PC-3 (cell line): ENCODE measurements at regions of chr7 and their contacts with region 1.

Region 1: DNA sequence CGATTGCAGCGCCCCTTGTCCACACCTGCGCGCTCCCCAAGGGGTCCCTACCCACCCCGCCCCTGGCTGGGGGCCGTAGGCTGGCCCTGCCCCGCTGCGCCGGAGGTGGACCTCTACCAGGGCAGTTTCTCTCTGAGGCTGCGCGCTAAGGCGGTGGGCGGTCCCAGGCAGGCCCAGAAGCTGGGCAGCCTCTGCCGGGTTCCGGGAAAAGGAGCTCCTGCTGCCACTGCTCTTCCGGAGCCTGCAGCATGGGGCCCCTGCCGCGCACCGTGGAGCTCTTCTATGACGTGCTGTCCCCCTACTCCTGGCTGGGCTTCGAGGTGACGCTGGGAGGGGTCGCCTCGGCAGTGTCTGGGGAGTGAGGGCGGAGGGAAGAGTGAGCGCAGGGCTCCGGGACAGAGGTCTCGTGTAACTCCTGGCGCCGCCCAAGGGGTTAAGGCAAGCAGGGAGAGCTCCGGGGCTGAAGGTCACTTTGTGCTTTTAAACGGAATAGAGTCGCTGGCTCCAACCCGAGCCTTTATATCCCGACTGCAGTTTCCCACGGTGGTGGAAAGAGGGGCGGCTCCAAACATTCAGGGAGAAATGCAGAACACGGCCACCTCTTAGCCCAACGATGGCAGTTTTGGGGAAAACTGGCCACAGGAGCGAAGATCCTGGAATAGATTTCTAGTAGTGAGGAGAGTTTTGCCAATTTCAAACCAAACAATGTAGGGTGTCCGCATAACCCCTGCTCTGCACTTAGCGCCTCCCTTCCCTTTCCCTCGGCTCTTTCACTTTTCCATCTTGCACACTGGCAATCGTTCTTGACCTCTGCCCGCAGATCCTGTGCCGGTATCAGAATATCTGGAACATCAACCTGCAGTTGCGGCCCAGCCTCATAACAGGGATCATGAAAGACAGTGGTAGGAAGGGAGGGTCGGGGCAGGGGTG is at the start of gene GSTK1:
- DNase-seq: peak; percentile 69
- ATAC-seq: peak; percentile 98
- H3K4me3 ChIP-seq: peak within 1 kb of the TSS; percentile 83
- H3K27ac ChIP-seq: peak within 1 kb of the TSS; percentile 6
- H3K4me1 ChIP-seq: peaks cover 31% of the 10 kb centered on the region
- H3K27me3 ChIP-seq: no peaks in the 10 kb centered on the region
- CTCF ChIP-seq: no peak
- total RNA-seq, gene GSTK1: 111 and 117 TPM in 2 replicates

Region 2: GRCh38 chr7:143279186-143280098 is 15.9 kb after region 1 on chr7:
- CTCF ChIA-PET with region 1: no interaction called
- POLR2A ChIA-PET with region 1: interaction called, 7 read pairs
- intact Hi-C with region 1: loop called (anchors 2 kb)
- DNase-seq: peak; percentile 91
- ATAC-seq: peak; percentile 80
- H3K4me3 ChIP-seq: peak overlapping the region; percentile 20; the same call in 1 of the 2 replicates
- H3K27ac ChIP-seq: peak overlapping the region; percentile 57
- H3K4me1 ChIP-seq: peaks cover 34% of the 10 kb centered on the region
- H3K27me3 ChIP-seq: no peaks in the 10 kb centered on the region
- CTCF ChIP-seq: no peak